WTC11 (cell line): ENCODE measurements at regions of chr18 and their contacts with region 1.

Region 1: DNA sequence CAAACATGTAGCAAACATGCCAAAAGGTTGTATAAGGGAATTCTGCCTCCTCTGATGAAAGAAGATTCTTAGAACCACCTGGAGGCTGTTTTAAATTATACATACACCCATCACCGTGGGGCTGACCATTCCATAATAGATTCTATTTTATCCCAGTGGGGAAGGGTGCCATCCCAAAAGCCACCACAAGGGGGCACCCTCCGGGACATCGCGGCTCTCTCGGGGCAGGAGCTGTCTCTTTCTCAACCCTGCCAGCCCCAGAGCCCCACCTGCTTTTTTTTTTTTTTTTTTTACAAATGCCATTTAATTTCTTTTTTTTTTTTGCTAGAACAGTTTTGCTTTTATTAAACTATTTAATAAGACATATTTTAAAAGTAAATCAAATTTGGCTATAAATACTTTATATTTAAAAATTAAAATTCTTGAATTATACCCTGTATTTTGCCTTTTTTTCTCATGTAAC is 8.6 kb upstream of the MTCL1 start:
- DNase-seq: peak; percentile 83
- ATAC-seq: peak; percentile 85
- H3K4me3 Mint-ChIP-seq: no peak overlapping the region
- H3K27ac Mint-ChIP-seq: no peak overlapping the region
- H3K4me1 Mint-ChIP-seq: peaks cover 2% of the 10 kb centered on the region; the same call in 1 of the 2 replicates
- H3K27me3 Mint-ChIP-seq: no peaks in the 10 kb centered on the region
- CTCF ChIP-seq: peak; percentile 92

Region 2: GRCh38 chr18:8501044-8501443 is 195.7 kb before region 1 on chr18:
- CTCF ChIA-PET with region 1: no interaction called
- POLR2A ChIA-PET with region 1: no interaction called
- DNase-seq: no peak
- ATAC-seq: no peak
- H3K4me3 Mint-ChIP-seq: no peak overlapping the region
- H3K27ac Mint-ChIP-seq: no peak overlapping the region
- H3K4me1 Mint-ChIP-seq: peaks cover 7% of the 10 kb centered on the region
- H3K27me3 Mint-ChIP-seq: no peaks in the 10 kb centered on the region
- CTCF ChIP-seq: no peak

Region 3: DNA sequence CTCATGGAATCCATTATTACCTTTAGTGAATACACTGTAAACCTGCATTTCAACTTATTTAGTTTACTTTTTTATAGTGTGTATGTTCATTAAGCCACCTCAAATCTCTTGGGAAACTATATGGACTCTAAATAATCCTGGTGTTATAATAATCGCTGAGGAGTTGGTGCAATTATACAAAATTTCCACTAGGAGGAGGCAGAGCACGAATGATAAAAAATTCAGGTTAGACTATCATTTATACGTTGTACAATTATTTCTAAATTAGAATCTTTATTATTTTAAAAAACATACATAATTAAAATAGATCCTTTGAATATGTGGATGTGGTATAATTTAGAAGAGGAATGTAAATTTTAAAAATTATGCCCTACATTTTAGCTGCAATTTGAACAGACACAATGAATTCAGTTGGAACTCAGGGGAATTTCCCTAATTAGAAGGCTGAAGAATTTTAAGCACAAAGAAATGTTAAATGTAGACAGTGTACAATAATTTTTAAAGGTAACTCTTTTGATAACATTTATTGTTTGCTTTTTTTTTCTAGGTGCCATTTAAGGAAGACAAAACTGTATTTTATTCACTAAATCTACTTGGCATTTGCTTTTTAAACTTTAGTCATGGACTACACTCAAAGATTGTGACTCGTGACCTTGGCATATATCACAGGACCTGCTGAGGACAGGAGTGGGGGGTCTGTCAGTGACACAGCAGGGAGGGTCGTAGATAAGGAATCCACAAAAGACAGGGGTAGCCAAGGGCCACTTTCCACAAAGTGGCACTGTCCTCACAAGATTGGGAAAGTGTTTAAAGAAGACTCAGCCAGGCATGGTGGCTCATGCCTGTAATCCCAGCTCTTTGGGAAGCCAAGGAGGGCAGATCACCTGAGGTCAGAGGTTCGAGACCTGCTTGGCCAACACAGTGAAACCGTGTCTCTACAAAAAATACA is 42.0 kb before region 1 on chr18:
- CTCF ChIA-PET with region 1: interaction called, 10 read pairs
- POLR2A ChIA-PET with region 1: no interaction called
- DNase-seq: no peak
- ATAC-seq: no peak
- H3K4me3 Mint-ChIP-seq: no peak overlapping the region
- H3K27ac Mint-ChIP-seq: peak overlapping the region; percentile 81
- H3K4me1 Mint-ChIP-seq: peaks cover 19% of the 10 kb centered on the region
- H3K27me3 Mint-ChIP-seq: no peaks in the 10 kb centered on the region
- CTCF ChIP-seq: peak; percentile 37

Region 4: DNA sequence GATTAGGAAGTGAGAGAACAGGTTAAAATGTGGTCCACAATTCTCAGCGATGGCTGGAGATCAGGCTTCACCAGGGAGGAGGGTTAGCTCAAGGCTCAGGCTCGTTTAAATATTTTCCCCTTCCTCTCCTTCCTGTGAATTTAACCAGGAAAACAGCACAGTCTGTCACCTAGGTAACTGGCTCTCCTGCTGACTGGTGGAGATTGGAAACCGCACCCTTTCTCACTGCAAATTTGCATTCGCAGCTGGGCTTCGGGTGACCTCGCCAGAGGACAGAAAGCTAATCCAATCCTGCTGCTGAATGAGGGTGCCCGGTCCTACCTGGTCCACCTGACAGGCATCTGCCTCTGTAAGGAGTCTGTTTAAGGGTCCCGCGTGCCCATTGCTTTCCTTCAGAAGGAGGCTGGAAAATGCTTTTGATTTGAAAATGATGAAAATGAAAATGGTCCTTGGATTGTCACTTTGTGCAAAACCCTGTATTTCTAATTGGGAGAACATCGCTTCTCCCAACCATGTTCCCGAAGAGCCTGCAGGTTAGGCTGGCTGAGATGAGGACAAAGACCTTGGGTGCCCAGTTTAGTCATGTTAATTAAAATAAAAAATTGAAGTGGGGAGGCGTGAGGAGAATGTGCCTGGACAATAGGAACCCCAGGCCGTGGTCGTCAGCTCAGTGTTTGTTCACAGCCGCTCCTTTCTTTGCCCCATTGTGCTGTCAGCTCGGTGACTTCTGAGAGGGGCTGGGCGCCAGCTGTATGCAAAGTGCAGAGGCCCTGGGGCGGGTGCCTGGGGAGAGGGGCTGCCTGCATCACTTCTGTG is 34.8 kb before region 1 on chr18:
- CTCF ChIA-PET with region 1: interaction called, 11 read pairs
- POLR2A ChIA-PET with region 1: no interaction called
- DNase-seq: peak; percentile 72
- ATAC-seq: peak; percentile 82
- H3K4me3 Mint-ChIP-seq: peak overlapping the region; percentile 49
- H3K27ac Mint-ChIP-seq: peak overlapping the region; percentile 69
- H3K4me1 Mint-ChIP-seq: peaks cover 45% of the 10 kb centered on the region
- H3K27me3 Mint-ChIP-seq: peaks cover 2% of the 10 kb centered on the region; the same call in 1 of the 2 replicates
- CTCF ChIP-seq: no peak

Region 5: DNA sequence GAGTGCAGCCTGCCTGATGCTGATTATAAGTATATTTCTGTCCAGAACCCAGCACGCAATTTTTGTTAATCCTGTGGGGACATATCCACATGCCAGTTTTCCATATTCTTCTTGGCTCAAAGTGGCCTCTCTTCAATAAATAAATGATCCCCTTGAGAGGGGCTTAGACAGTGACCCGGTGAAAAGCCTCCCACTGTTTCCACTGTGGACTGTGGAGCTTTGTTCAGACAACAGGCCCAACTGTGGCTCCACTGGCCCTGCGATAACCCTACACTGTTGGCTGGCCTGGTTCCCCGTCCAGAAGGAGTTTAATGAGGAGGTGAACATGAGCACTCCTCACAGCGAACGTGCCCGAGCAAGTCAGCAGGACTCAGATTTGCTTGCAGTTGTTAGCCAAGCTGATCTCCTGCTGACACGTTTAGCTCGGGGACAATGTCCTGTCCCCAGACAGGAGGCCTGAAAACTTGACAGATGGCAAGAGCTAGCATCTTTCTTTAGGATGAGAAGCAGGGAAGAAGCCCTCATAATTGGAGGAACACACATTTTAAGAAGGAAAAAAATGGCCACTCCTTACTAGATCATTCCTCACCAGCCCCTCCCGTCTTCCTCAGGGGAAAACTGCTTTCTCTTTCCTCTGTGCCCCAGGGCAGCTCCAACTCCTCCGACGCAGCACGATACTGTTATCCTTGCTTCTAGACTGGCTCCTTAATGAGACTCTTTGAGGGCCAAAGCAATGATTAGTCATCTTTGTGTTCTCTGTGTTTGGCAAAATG is 11.5 kb before region 1 on chr18:
- CTCF ChIA-PET with region 1: interaction called, 20 read pairs
- POLR2A ChIA-PET with region 1: no interaction called
- DNase-seq: no peak
- ATAC-seq: peak; percentile 51; the same call in 1 of the 2 replicates
- H3K4me3 Mint-ChIP-seq: no peak overlapping the region
- H3K27ac Mint-ChIP-seq: peak overlapping the region; percentile 67
- H3K4me1 Mint-ChIP-seq: peaks cover 42% of the 10 kb centered on the region
- H3K27me3 Mint-ChIP-seq: no peaks in the 10 kb centered on the region; the same call in 1 of the 2 replicates
- CTCF ChIP-seq: no peak